ENCODE measurements at regions of chr7 and their contacts with region 1.

Region 1: GRCh38 chr7:42232275-42232674 is 4.7 kb downstream of the GLI3 start:
- DNase-seq: peak; percentile 94
- H3K4me3 ChIP-seq: peak overlapping the region in 1 of 3 experiments; percentile 8
- H3K27ac ChIP-seq: peak overlapping the region; percentile 59
- H3K4me1 ChIP-seq: peaks cover 50% of the 10 kb centered on the region
- H3K27me3 ChIP-seq: no peaks in the 10 kb centered on the region
- CTCF ChIP-seq: no peak

Region 2: DNA sequence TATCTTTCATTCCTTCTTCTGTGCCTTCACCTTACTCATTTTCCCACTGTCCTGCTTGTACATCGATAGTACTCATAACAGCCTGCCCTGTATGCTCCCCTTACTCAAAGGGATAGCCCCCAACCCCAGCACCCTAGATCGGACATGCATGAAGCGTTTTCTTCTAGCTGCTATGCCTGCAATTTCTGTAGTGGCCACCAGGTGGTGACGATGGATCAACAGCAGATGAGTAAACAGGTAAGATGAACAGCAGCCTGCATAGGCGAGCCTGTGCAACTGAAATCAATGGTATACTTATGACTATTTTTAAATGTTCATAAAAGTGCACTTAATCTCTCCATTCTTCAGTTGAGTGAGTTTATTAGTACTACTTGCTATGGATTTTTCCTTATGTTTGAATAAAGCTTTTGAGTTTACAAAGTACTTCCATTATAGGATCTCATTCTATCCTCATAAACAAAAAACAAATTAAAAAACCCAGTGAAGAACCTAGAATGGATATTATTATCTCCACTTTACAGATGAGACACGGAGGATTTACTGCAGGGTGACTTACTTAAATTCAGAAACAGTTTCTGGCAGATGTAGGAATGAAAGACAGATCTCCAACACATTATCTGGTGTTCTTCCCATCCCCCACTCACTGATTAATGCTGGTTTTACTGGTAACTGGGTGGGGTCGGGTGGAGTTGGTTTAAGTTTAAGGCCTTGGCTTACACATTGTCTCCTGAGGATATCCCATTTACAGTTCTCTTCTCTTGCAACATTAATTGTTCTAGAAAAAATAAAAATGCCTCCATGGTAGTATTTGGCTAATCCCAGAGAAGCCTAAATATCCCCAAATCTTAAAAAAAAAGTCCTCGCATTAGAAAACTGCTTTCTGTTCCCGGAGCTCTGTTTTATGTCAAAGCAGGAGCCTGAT is 217.4 kb before region 1 on chr7:
- CTCF ChIA-PET with region 1: no interaction called
- dilution Hi-C with region 1: no loop called
- in situ Hi-C with region 1: no loop called
- intact Hi-C with region 1: loop called (anchors 1 kb)
- DNase-seq: peak; percentile 32
- H3K4me3 ChIP-seq: no peak overlapping the region
- H3K27ac ChIP-seq: no peak overlapping the region
- H3K4me1 ChIP-seq: no peaks in the 10 kb centered on the region
- H3K27me3 ChIP-seq: no peaks in the 10 kb centered on the region
- CTCF ChIP-seq: peak; percentile 73 to 85

Region 3: DNA sequence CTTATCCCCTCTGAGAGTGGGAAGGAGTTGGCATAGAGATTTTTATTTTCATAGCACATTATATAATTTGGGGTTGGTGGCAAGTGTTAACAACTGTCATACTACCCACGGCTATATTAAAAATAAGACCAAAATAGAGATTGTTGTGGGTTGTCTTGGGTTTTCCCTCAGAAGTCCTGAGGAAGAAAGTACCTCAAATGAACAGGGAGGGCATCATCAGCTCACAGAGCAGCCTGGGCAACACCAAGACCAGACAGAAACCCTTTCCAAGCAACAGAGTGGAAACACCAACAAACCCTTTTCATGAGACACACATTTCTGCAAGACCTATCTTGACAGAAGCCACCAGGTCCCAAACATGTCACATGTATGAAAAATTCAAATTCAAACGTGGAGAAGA is 116.5 kb before region 1 on chr7:
- CTCF ChIA-PET with region 1: interaction called, 14 read pairs
- dilution Hi-C with region 1: no loop called
- in situ Hi-C with region 1: no loop called
- intact Hi-C with region 1: no loop called
- DNase-seq: no peak
- H3K4me3 ChIP-seq: no peak overlapping the region
- H3K27ac ChIP-seq: no peak overlapping the region
- H3K4me1 ChIP-seq: no peaks in the 10 kb centered on the region
- H3K27me3 ChIP-seq: no peaks in the 10 kb centered on the region
- CTCF ChIP-seq: peak in 1 of 2 donors; percentile 15

Region 4: GRCh38 chr7:42156291-42156870 is 75.9 kb before region 1 on chr7:
- CTCF ChIA-PET with region 1: no interaction called
- dilution Hi-C with region 1: loop called (anchors 5 kb)
- in situ Hi-C with region 1: no loop called
- intact Hi-C with region 1: no loop called
- DNase-seq: peak; percentile 68
- H3K4me3 ChIP-seq: no peak overlapping the region
- H3K27ac ChIP-seq: peak overlapping the region; percentile 56
- H3K4me1 ChIP-seq: peaks cover 31% of the 10 kb centered on the region
- H3K27me3 ChIP-seq: no peaks in the 10 kb centered on the region
- CTCF ChIP-seq: peak in 1 of 2 donors; percentile 7

Region 5: DNA sequence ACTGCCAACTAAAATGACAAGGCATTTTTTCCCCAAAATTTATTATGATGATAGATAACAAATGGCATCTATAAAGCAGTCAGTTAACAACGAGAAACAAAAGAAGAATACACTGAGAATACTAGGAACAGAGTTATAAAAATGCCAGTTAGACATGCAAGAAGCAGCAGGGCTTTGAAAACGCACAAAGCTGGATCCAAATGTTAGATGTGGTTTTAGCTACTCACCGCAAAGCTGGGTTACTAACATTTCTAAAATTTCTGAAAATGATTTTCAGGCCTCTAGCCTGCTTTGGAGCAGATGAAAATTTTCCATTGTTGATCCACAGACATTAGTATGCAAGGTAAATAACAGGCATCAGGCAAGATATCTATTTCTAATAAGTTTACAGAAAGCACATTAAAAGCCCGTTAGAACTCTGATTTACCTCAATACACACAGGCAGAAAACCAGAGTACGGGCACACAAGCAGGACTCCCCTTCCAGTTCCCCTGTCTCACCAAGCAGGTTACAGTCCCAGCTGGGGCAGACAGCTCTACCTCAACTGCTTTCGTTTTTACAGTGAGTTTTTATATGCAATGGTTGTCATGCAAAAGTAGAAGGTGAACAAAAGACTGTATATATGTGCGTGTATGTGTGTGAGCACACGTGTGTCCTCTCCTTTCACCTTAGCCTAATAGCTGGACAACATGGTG is 33.2 kb before region 1 on chr7:
- CTCF ChIA-PET with region 1: no interaction called
- dilution Hi-C with region 1: no loop called
- in situ Hi-C with region 1: no loop called
- intact Hi-C with region 1: loop called (anchors 2 kb)
- DNase-seq: peak; percentile 55
- H3K4me3 ChIP-seq: no peak overlapping the region
- H3K27ac ChIP-seq: peak overlapping the region; percentile 78
- H3K4me1 ChIP-seq: peaks cover 32% of the 10 kb centered on the region
- H3K27me3 ChIP-seq: no peaks in the 10 kb centered on the region
- CTCF ChIP-seq: no peak

Measured in mammary epithelial cell (primary cell).